ENCODE measurements at regions of chr10 and their contacts with region 1.

Region 1: DNA sequence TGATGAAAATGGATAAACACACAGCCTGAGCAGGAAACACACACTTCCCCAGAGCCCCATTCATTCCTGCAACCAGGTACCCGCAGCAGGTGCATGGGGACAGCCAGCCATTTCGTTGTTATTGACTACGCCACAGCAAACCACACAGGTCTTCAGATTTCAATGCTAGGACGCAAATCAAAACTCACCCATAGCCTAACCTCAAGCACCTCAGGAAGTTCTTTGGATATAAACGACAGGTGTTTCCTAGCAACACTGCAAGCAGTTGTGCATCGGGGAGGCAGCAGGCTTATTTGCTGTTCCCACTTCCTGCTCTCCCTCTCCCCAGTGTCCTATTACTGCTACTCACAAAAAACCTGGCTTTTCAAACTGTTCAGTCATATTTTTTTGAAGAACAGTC is 176.5 kb upstream of the FRMD4A start:
- DNase-seq: no peak
- H3K4me3 ChIP-seq: no peak overlapping the region
- H3K27ac ChIP-seq: no peak overlapping the region
- H3K4me1 ChIP-seq: no peaks in the 10 kb centered on the region
- H3K27me3 ChIP-seq: no peaks in the 10 kb centered on the region
- CTCF ChIP-seq: no peak

Region 2: GRCh38 chr10:14385596-14386593 is 121.3 kb before region 1 on chr10:
- intact Hi-C with region 1: no loop called
- DNase-seq: no peak
- H3K4me3 ChIP-seq: no peak overlapping the region
- H3K27ac ChIP-seq: no peak overlapping the region
- H3K4me1 ChIP-seq: peaks cover 0 to 3% (median 0%) of the 10 kb centered on the region in 4 donors
- H3K27me3 ChIP-seq: no peaks in the 10 kb centered on the region
- CTCF ChIP-seq: no peak

Region 3: DNA sequence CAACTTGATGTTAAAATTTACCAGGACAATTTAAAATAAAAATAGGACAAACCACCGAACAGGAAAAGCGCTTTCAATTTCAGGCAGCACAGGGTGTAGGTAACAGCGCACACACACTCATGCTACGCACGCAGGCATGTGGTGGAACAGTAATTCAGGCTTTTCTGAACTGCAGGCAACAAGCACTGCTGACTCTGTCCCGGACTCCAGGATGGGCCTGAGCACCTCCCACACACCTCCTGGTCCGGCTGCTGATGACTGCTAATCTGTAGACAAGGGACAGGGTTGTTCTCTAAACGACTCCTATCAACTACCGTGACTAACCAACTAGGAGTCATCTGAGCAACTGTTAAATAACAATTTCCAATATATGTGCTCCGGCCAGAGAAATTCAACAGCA is 16.1 kb after region 1 on chr10:
- intact Hi-C with region 1: loop called (anchors 1 kb)
- DNase-seq: no peak
- H3K4me3 ChIP-seq: no peak overlapping the region
- H3K27ac ChIP-seq: no peak overlapping the region
- H3K4me1 ChIP-seq: no peaks in the 10 kb centered on the region
- H3K27me3 ChIP-seq: no peaks in the 10 kb centered on the region
- CTCF ChIP-seq: no peak